ENCODE measurements at regions of chr2 and their contacts with region 1.

Region 1: GRCh38 chr2:164764996-164765395 is 76.6 kb downstream of the COBLL1 start:
- DNase-seq: no peak
- ATAC-seq: no peak
- H3K4me3 ChIP-seq: no peak overlapping the region
- H3K27ac ChIP-seq: no peak overlapping the region
- H3K4me1 ChIP-seq: peaks cover 0 to 20% (median 0%) of the 10 kb centered on the region in 12 donors
- H3K27me3 ChIP-seq: no peaks in the 10 kb centered on the region
- CTCF ChIP-seq: no peak
- POLR2A ChIP-seq: no peak

Region 2: GRCh38 chr2:164745012-164745805 is 19.8 kb before region 1 on chr2:
- intact Hi-C with region 1: no loop called
- DNase-seq: no peak
- ATAC-seq: no peak
- H3K4me3 ChIP-seq: no peak overlapping the region
- H3K27ac ChIP-seq: no peak overlapping the region
- H3K4me1 ChIP-seq: peaks cover 0 to 42% (median 13%) of the 10 kb centered on the region in 12 donors
- H3K27me3 ChIP-seq: no peaks in the 10 kb centered on the region
- CTCF ChIP-seq: no peak
- POLR2A ChIP-seq: no peak

Region 3: GRCh38 chr2:164810843-164811242 is 45.8 kb after region 1 on chr2:
- intact Hi-C with region 1: loop called in 1 of 10 experiments (anchors 5 kb)
- DNase-seq: no peak
- ATAC-seq: no peak
- H3K4me3 ChIP-seq: no peak overlapping the region
- H3K27ac ChIP-seq: peak overlapping the region in 2 of 12 donors; percentile 7 to 20
- H3K4me1 ChIP-seq: peaks cover 3 to 62% (median 24%) of the 10 kb centered on the region in 12 donors
- H3K27me3 ChIP-seq: no peaks in the 10 kb centered on the region
- CTCF ChIP-seq: no peak
- POLR2A ChIP-seq: no peak

Region 4: DNA sequence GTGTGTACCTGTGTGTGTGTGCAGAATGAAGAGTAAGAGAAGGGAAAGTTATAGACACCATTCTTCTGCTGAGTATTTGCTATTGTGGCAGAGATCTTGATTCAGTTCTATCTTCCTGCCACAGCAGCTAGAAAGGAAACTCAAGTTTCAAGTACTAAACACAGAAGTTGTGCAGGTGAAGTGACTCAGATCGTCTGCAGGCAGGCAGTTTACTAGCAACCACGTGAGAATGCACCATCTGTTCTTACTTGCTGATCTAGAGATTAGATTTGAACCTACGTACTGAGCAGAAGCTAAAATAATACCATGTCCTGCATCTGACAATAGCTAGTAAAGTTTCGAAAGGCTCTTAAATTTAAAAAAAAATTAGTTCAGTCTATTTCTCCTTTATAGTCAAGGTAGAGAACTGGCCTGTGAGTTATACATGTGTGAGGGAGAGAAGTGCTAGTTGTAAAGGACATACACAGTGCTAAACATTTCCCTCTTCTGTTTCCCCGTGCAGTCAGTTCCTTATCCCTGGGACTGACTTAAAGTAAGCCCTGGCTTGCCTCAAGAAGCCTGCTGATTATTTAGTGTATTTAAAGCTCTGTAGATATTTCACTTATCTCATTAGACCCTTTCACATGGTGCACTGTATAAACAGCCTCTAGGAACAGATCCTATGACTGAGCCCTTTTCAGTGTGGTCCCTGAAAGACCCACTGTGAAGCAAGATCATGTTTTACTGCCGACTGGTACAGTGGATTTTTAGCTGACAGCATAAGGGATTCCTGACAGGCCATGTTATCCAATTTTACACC is 145.3 kb after region 1 on chr2:
- intact Hi-C with region 1: loop called in 1 of 10 experiments (anchors 1 kb)
- DNase-seq: no peak
- ATAC-seq: peak in 3 of 4 donors; percentile 46 to 62 (median 50)
- H3K4me3 ChIP-seq: peak overlapping the region in 1 of 12 donors; percentile 11
- H3K27ac ChIP-seq: peak overlapping the region in 5 of 12 donors; percentile 4 to 57 (median 32)
- H3K4me1 ChIP-seq: peaks cover 0 to 49% (median 13%) of the 10 kb centered on the region in 12 donors
- H3K27me3 ChIP-seq: no peaks in the 10 kb centered on the region
- CTCF ChIP-seq: no peak
- POLR2A ChIP-seq: no peak